Mammary epithelial cell (primary cell): ENCODE measurements at regions of chr5 and their contacts with region 1.

Region 1: DNA sequence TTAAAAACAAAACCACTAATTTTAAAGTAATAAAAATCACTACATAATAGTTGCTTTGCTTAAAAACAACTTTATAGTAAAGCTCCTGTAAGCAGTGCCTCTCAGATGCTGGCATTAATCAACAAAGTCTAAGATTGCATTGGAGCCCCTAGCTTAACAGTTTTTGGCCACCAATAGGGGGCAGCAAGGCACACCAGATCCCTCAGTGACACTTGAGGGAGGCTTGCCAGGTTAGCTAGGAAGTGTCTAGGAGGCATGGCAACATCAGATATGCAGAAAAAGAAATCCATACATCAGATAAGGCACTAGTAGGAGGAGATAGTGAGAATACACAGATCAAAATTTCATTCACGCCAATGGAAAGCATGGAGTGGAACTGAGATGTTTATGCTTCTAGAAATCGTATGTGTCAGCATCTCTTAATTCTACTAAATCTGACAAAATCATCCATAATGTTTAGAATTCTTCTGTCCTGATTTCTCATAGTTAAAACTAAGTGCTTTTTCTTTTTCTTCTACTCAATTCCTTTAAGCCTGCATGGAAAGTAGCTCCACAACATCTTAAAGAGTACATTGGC is 73.6 kb upstream of the PAM start:
- DNase-seq: peak; percentile 68
- H3K4me3 ChIP-seq: no peak overlapping the region
- H3K27ac ChIP-seq: no peak overlapping the region
- H3K4me1 ChIP-seq: no peaks in the 10 kb centered on the region
- H3K27me3 ChIP-seq: no peaks in the 10 kb centered on the region
- CTCF ChIP-seq: peak; percentile 87 to 92

Region 2: GRCh38 chr5:102638912-102639652 is 42.4 kb before region 1 on chr5:
- CTCF ChIA-PET with region 1: no interaction called
- dilution Hi-C with region 1: no loop called
- in situ Hi-C with region 1: no loop called
- intact Hi-C with region 1: no loop called
- DNase-seq: no peak
- H3K4me3 ChIP-seq: no peak overlapping the region
- H3K27ac ChIP-seq: no peak overlapping the region
- H3K4me1 ChIP-seq: no peaks in the 10 kb centered on the region
- H3K27me3 ChIP-seq: peaks cover 3% of the 10 kb centered on the region
- CTCF ChIP-seq: no peak

Region 3: DNA sequence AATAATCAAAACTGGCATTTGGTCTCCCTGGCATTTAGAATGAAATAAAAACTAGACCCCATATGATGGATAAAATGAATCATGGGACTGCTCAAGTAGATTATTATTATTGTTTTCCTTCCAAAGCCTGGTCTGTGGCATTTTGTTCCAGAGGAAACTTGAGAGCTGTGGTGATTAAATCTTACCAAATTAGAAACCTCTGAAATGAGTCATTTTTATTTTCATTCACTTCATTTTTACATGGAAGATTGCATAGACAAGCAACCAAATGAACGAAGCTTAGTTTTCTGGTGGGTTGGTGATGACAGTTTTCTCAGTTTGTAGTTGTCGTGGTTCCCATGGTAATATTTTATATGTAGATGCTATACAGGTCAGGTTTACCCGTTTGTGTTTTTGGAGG is 97.0 kb after region 1 on chr5:
- CTCF ChIA-PET with region 1: no interaction called
- dilution Hi-C with region 1: no loop called
- in situ Hi-C with region 1: loop called in 1 of 2 experiments (anchors 25 kb)
- intact Hi-C with region 1: loop called (anchors 1 kb)
- DNase-seq: peak; percentile 78
- H3K4me3 ChIP-seq: no peak overlapping the region
- H3K27ac ChIP-seq: peak overlapping the region; percentile 37
- H3K4me1 ChIP-seq: peaks cover 12% of the 10 kb centered on the region
- H3K27me3 ChIP-seq: no peaks in the 10 kb centered on the region
- CTCF ChIP-seq: no peak

Region 4: GRCh38 chr5:102865510-102866236 is 184.2 kb after region 1 on chr5:
- CTCF ChIA-PET with region 1: no interaction called
- dilution Hi-C with region 1: no loop called
- in situ Hi-C with region 1: no loop called
- intact Hi-C with region 1: loop called (anchors 10 kb)
- DNase-seq: peak; percentile 81
- H3K4me3 ChIP-seq: peak overlapping the region; percentile 54 to 67 (median 58)
- H3K27ac ChIP-seq: peak overlapping the region; percentile 62
- H3K4me1 ChIP-seq: peaks cover 12% of the 10 kb centered on the region
- H3K27me3 ChIP-seq: no peaks in the 10 kb centered on the region
- CTCF ChIP-seq: no peak

Region 5: DNA sequence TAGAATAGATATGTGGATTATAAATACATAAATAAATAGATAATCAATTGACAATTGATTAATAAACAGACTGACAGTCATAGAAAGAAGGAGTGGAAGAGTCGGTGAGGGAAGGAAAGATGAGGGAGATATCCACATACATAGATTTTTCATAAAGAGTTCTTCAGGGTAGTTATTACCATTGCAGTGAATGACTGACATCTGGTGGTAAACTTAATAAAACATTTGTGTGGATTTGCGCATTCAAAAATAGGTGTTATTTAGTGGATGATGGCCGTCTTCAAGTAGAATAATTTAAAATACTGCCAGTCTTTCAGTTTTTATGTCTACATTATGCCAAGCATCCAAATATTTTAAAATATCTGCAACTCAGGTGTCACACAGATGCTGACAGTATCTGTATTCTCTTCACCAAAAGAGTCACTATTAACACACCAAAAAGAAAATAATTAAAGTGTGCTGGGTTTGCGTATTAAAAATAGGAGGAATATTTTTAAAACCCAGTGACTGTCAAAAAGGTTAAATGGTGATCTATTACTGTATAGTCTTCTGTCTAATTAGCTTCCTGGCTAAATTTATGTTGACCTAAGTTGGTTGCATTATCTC is 359.7 kb after region 1 on chr5:
- CTCF ChIA-PET with region 1: no interaction called
- dilution Hi-C with region 1: no loop called
- in situ Hi-C with region 1: no loop called
- intact Hi-C with region 1: loop called (anchors 1 kb)
- DNase-seq: peak; percentile 37
- H3K4me3 ChIP-seq: no peak overlapping the region
- H3K27ac ChIP-seq: no peak overlapping the region
- H3K4me1 ChIP-seq: no peaks in the 10 kb centered on the region
- H3K27me3 ChIP-seq: peaks cover 2% of the 10 kb centered on the region
- CTCF ChIP-seq: peak; percentile 28 to 56